Naive thymus-derived CD4-positive, alpha-beta T cell (primary cell): ENCODE measurements at regions of chr15 and their contacts with region 1.

Region 1: GRCh38 chr15:90598031-90598577 is 68.4 kb downstream of the CRTC3 start:
- DNase-seq: no peak
- ATAC-seq: peak; percentile 26
- H3K4me3 ChIP-seq: peak overlapping the region; percentile 7
- H3K4me3 Mint-ChIP-seq: peak overlapping the region; percentile 48 to 83 (median 78)
- H3K27ac ChIP-seq: peak overlapping the region; percentile 73
- H3K27ac Mint-ChIP-seq: peak overlapping the region; percentile 91 to 99 (median 98)
- H3K4me1 ChIP-seq: peaks cover 31 to 79% of the 10 kb centered on the region in 2 donors
- H3K4me1 Mint-ChIP-seq: peaks cover 73 to 96% (median 87%) of the 10 kb centered on the region in 7 donors
- H3K27me3 ChIP-seq: no peaks in the 10 kb centered on the region
- H3K27me3 Mint-ChIP-seq: no peaks in the 10 kb centered on the region

Region 2: GRCh38 chr15:90400406-90401314 is 197.4 kb before region 1 on chr15:
- CTCF ChIA-PET with region 1: no interaction called
- POLR2A ChIA-PET with region 1: no interaction called
- intact Hi-C with region 1: loop called in 1 of 2 experiments (anchors 10 kb)
- DNase-seq: peak in 8 of 9 donors; percentile 49 to 89 (median 82)
- ATAC-seq: peak; percentile 98
- H3K4me3 ChIP-seq: peak overlapping the region; percentile 37
- H3K4me3 Mint-ChIP-seq: peak overlapping the region; percentile 61 to 86 (median 80)
- H3K27ac ChIP-seq: peak overlapping the region; percentile 83
- H3K27ac Mint-ChIP-seq: peak overlapping the region; percentile 94 to 99 (median 99)
- H3K4me1 ChIP-seq: peaks cover 30 to 36% of the 10 kb centered on the region in 2 donors
- H3K4me1 Mint-ChIP-seq: peaks cover 38 to 71% (median 64%) of the 10 kb centered on the region in 7 donors
- H3K27me3 ChIP-seq: no peaks in the 10 kb centered on the region
- H3K27me3 Mint-ChIP-seq: no peaks in the 10 kb centered on the region

Region 3: GRCh38 chr15:90539789-90540188 is 58.3 kb before region 1 on chr15:
- CTCF ChIA-PET with region 1: interaction called, 4 read pairs
- POLR2A ChIA-PET with region 1: interaction called, 14 read pairs
- intact Hi-C with region 1: loop called in 1 of 2 experiments (anchors 2 kb)
- DNase-seq: peak in 7 of 9 donors; percentile 66 to 84 (median 79)
- ATAC-seq: peak; percentile 89
- H3K4me3 ChIP-seq: peak overlapping the region; percentile 7
- H3K4me3 Mint-ChIP-seq: peak overlapping the region; percentile 79 to 97 (median 88)
- H3K27ac ChIP-seq: peak overlapping the region; percentile 83
- H3K27ac Mint-ChIP-seq: peak overlapping the region; percentile 94 to 99 (median 97)
- H3K4me1 ChIP-seq: peaks cover 7 to 67% of the 10 kb centered on the region in 2 donors
- H3K4me1 Mint-ChIP-seq: peaks cover 45 to 93% (median 86%) of the 10 kb centered on the region in 7 donors
- H3K27me3 ChIP-seq: no peaks in the 10 kb centered on the region
- H3K27me3 Mint-ChIP-seq: no peaks in the 10 kb centered on the region

Region 4: DNA sequence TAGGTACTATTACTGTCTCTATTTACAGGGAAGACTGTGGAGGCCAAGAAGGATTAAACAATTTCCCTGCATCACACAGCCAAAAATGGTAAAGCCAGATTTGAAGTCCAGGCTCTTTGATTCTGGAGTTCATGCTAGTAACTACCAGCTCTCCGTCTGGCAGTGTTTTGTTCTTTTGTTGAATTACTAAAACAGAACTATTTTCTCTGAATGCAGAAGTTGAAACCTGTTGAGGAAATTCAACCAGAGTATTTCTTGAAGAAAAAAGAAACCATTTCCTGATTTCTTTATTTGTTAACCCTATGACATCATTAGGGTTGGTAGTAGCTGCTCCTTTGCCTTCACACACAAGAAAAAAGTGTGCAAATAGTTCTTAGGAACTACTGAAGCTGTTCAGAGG is 34.1 kb before region 1 on chr15:
- CTCF ChIA-PET with region 1: interaction called, 5 read pairs
- POLR2A ChIA-PET with region 1: interaction called, 23 read pairs
- intact Hi-C with region 1: loop called (anchors 1 kb)
- DNase-seq: peak in 7 of 9 donors; percentile 46 to 80 (median 70)
- ATAC-seq: peak; percentile 65
- H3K4me3 ChIP-seq: peak overlapping the region; percentile 3
- H3K4me3 Mint-ChIP-seq: peak overlapping the region; percentile 60 to 90 (median 74)
- H3K27ac ChIP-seq: peak overlapping the region; percentile 68
- H3K27ac Mint-ChIP-seq: peak overlapping the region; percentile 89 to 99 (median 95)
- H3K4me1 ChIP-seq: peaks cover 49 to 89% of the 10 kb centered on the region in 2 donors
- H3K4me1 Mint-ChIP-seq: peaks cover 65 to 97% (median 90%) of the 10 kb centered on the region in 7 donors
- H3K27me3 ChIP-seq: no peaks in the 10 kb centered on the region
- H3K27me3 Mint-ChIP-seq: no peaks in the 10 kb centered on the region

Region 5: GRCh38 chr15:90581771-90582352 is 16.2 kb before region 1 on chr15:
- CTCF ChIA-PET with region 1: interaction called, 4 read pairs
- POLR2A ChIA-PET with region 1: interaction called, 9 read pairs
- intact Hi-C with region 1: loop called in 1 of 2 experiments (anchors 1 kb)
- DNase-seq: peak in 2 of 9 donors; percentile 25 to 29
- ATAC-seq: peak; percentile 51
- H3K4me3 ChIP-seq: no peak overlapping the region
- H3K4me3 Mint-ChIP-seq: peak overlapping the region; percentile 62 to 86 (median 76)
- H3K27ac ChIP-seq: peak overlapping the region; percentile 70
- H3K27ac Mint-ChIP-seq: peak overlapping the region; percentile 65 to 99 (median 92)
- H3K4me1 ChIP-seq: peaks cover 4 to 45% of the 10 kb centered on the region in 2 donors
- H3K4me1 Mint-ChIP-seq: peaks cover 48 to 94% (median 78%) of the 10 kb centered on the region in 7 donors
- H3K27me3 ChIP-seq: no peaks in the 10 kb centered on the region
- H3K27me3 Mint-ChIP-seq: no peaks in the 10 kb centered on the region

Region 6: GRCh38 chr15:90665288-90666134 is 67.4 kb after region 1 on chr15:
- CTCF ChIA-PET with region 1: no interaction called
- POLR2A ChIA-PET with region 1: no interaction called
- intact Hi-C with region 1: no loop called
- DNase-seq: peak in 8 of 9 donors; percentile 12 to 67 (median 38)
- ATAC-seq: peak; percentile 60
- H3K4me3 ChIP-seq: peak overlapping the region; percentile 58
- H3K4me3 Mint-ChIP-seq: peak overlapping the region; percentile 77 to 90 (median 84)
- H3K27ac ChIP-seq: peak overlapping the region; percentile 15
- H3K27ac Mint-ChIP-seq: peak overlapping the region in 8 of 9 donors; percentile 41 to 93 (median 70)
- H3K4me1 ChIP-seq: peaks cover 18 to 22% of the 10 kb centered on the region in 2 donors
- H3K4me1 Mint-ChIP-seq: peaks cover 31 to 68% (median 55%) of the 10 kb centered on the region in 7 donors
- H3K27me3 ChIP-seq: no peaks in the 10 kb centered on the region
- H3K27me3 Mint-ChIP-seq: peaks cover 0 to 13% (median 10%) of the 10 kb centered on the region in 5 donors